ENCODE measurements at regions of chr9 and their contacts with region 1.

Region 1: GRCh38 chr9:132944302-132945185 is at the start of gene TSC1:
- DNase-seq: peak; percentile 91 to 97 (median 94)
- H3K4me3 ChIP-seq: peak within 1 kb of the TSS; percentile 73 to 100 (median 99)
- H3K27ac ChIP-seq: peak within 1 kb of the TSS; percentile 91 to 100 (median 99)
- H3K27me3 ChIP-seq: no peaks in the 10 kb centered on the region
- CTCF ChIP-seq: peak in 28 of 56 donors; percentile 4 to 55 (median 21)
- total RNA-seq, gene TSC1: 80.3 to 138 (median 112) TPM

Region 2: GRCh38 chr9:132401824-132402223 is 542.7 kb before region 1 on chr9:
- intact Hi-C with region 1: no loop called
- DNase-seq: no peak
- H3K4me3 ChIP-seq: no peak overlapping the region
- H3K27ac ChIP-seq: no peak overlapping the region
- H3K27me3 ChIP-seq: no peaks in the 10 kb centered on the region
- CTCF ChIP-seq: no peak

Region 3: DNA sequence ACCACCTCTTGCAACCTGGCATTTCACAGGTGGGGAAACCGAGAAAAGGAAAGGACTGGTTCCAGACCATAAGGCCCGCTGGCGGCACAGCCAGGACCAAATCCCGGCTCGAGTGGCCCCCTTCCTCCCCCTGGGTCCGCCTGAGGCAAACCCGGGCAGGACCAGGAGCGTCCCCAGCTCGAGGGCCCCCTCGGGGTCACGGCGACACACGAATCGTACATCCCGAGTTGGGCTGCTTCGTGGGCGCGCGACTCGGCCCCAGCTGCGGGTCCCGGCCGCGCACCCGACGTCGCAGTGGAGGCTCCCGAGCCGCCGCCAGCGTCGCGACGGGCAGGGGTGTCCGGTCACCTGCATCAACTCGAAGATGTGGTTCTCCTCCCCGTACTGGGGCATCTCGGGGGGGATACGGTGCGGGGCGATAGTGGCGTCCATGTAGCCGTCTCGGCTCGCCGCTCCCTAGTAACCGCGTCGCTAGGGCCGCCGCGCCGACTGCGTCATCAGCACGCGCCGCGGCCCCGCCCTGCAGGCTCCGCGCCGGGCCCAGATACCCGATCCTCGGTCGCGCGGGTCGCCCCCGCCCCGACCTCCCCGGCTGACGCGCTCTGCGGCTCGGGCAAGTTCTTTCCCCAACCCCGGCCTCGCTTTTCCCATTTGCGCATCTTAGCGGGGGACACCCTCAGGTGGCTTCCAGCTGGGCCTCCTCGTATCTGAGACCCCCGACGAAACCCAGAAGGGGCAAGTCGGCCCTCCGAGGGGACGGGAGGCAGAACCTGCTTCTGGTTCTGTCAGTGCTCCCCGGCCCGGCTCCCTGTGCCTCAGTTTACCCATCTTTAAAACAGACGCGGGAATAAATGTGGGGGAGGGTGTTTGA is 66.5 kb before region 1 on chr9 and contains the start of gene AK8:
- intact Hi-C with region 1: loop called in 1 of 2 experiments (anchors 5 kb)
- DNase-seq: peak; percentile 51 to 86 (median 60)
- H3K4me3 ChIP-seq: peak within 1 kb of the TSS; percentile 60 to 99 (median 91)
- H3K27ac ChIP-seq: peak within 1 kb of the TSS in 51 of 59 donors; percentile 2 to 92 (median 69)
- H3K27me3 ChIP-seq: no peaks in the 10 kb centered on the region
- CTCF ChIP-seq: peak in 16 of 56 donors; percentile 4 to 37 (median 20)
- total RNA-seq, gene AK8: 0.77 to 10.6 (median 3.3) TPM

Region 4: GRCh38 chr9:132901856-132902831 is 42.4 kb before region 1 on chr9:
- intact Hi-C with region 1: loop called in 1 of 2 experiments (anchors 5 kb)
- DNase-seq: peak; percentile 54 to 92 (median 80)
- H3K4me3 ChIP-seq: peak overlapping the region in 1 of 59 donors; percentile 7
- H3K27ac ChIP-seq: peak overlapping the region in 42 of 59 donors; percentile 0 to 77 (median 44)
- H3K27me3 ChIP-seq: no peaks in the 10 kb centered on the region
- CTCF ChIP-seq: peak; percentile 83 to 99 (median 93)

Measured in dorsolateral prefrontal cortex (tissue), 120 donors.